ENCODE measurements at regions of chr2 and their contacts with region 1.

Region 1: DNA sequence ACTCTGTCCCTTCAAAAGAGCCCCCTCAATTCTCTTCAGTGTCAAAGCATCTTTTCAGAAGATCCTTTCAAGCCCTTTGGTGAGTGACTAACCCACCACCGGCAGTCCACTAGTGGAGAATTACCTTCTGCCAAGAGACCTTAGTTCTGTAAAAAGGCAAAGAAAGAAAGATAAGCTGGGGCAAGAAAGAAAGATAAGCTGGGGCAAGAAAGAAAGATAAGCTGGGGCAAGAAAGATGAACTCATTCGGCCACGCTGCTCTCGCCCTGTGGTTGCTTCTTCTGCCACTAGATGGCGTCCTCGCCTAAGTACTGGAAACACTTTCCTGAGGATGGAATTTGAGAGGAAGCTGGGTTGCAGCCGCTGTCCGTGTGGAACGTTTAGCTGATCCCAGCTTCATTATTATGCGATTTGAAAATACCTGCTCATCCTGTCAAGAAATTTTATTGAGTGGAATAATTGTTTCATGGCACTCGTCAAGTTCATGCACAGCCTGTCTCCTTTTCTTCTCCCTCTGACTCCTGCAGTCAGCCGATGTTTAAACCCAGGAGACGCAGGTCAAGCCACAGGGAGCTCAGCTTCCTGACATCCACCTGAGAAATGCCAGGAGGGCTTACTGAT is 17.3 kb upstream of the ANXA4 start:
- DNase-seq: peak; percentile 89
- H3K4me3 ChIP-seq: peak overlapping the region in 2 of 4 donors; percentile 14 to 37
- H3K27ac ChIP-seq: no peak overlapping the region
- H3K4me1 ChIP-seq: peaks cover 0 to 4% (median 2%) of the 10 kb centered on the region in 4 donors
- H3K27me3 ChIP-seq: no peaks in the 10 kb centered on the region
- CTCF ChIP-seq: peak; percentile 96 to 98 (median 96)
- EP300 ChIP-seq: no peak
- POLR2A ChIP-seq: no peak

Region 2: DNA sequence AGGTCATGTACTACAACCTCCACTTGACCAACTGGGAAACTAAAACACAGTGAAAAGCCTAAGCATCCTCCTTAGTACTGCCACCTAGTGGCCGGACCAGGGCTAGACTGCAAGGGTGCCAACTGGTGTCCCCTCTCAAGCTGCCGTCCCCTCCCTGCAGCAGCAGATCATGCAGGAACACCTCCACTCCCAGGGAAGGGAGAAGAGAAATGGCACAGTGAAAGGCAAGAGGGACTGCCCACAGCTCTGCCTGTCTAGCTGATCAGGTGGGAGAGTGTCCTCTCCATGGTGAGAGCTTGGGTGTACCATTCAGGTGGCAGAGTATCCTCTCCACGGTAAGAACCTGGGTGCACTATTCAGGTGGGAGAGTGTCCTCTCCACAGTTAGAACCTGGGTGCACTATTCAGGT is 159.2 kb before region 1 on chr2:
- in situ Hi-C with region 1: loop called in 3 of 4 experiments (anchors 10 to 25 kb)
- intact Hi-C with region 1: loop called (anchors 5 kb)
- DNase-seq: peak; percentile 64
- H3K4me3 ChIP-seq: no peak overlapping the region
- H3K27ac ChIP-seq: peak overlapping the region in 1 of 4 donors; percentile 50
- H3K4me1 ChIP-seq: peaks cover 0 to 52% (median 7%) of the 10 kb centered on the region in 4 donors
- H3K27me3 ChIP-seq: no peaks in the 10 kb centered on the region
- CTCF ChIP-seq: peak; percentile 51 to 66 (median 63)
- EP300 ChIP-seq: no peak
- POLR2A ChIP-seq: no peak

Region 3: DNA sequence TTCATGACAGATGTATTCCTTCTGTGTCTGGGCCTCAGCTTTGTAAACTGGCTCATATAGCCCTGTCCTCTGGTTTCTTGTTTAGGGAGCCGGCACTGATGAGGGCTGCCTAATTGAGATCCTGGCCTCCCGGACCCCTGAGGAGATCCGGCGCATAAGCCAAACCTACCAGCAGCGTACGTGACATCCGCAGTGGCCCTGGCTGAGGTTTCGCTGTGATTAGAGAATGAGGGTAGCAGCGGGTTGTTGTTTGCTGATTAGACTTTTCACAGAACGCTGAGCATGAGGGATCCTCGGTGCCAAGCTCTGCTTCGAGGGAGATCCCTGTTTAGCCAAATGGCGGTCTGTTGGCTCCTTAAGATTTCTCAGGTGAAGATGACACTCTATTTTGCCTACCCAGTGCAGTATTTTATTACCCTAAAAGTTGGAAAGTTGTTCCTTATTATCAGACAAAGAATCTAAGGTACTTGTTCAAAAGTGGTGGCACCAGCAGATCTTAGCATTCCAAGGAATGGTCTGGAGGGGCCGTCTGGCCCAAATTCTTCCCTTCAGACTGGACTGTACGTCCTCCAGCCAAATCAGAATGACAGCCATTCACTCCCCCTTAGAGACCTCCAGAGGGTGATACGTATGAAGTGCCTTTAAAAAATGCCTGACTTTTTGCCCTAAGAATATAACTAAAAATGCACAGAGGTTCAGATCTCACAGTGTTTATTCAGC is 83.3 kb after region 1 on chr2:
- in situ Hi-C with region 1: loop called in 3 of 4 experiments (anchors 5 to 10 kb)
- intact Hi-C with region 1: no loop called
- DNase-seq: no peak
- H3K4me3 ChIP-seq: no peak overlapping the region
- H3K27ac ChIP-seq: no peak overlapping the region
- H3K4me1 ChIP-seq: no peaks in the 10 kb centered on the region
- H3K27me3 ChIP-seq: no peaks in the 10 kb centered on the region
- CTCF ChIP-seq: no peak
- EP300 ChIP-seq: no peak
- POLR2A ChIP-seq: no peak

Region 4: GRCh38 chr2:69816923-69817542 is 92.4 kb after region 1 on chr2:
- in situ Hi-C with region 1: loop called in 3 of 4 experiments (anchors 5 to 10 kb)
- intact Hi-C with region 1: loop called (anchors 2 kb)
- DNase-seq: peak; percentile 82
- H3K4me3 ChIP-seq: no peak overlapping the region
- H3K27ac ChIP-seq: no peak overlapping the region
- H3K4me1 ChIP-seq: peaks cover 0 to 4% (median 0%) of the 10 kb centered on the region in 4 donors
- H3K27me3 ChIP-seq: no peaks in the 10 kb centered on the region
- CTCF ChIP-seq: peak; percentile 91 to 98 (median 95)
- EP300 ChIP-seq: no peak
- POLR2A ChIP-seq: no peak

Region 5: DNA sequence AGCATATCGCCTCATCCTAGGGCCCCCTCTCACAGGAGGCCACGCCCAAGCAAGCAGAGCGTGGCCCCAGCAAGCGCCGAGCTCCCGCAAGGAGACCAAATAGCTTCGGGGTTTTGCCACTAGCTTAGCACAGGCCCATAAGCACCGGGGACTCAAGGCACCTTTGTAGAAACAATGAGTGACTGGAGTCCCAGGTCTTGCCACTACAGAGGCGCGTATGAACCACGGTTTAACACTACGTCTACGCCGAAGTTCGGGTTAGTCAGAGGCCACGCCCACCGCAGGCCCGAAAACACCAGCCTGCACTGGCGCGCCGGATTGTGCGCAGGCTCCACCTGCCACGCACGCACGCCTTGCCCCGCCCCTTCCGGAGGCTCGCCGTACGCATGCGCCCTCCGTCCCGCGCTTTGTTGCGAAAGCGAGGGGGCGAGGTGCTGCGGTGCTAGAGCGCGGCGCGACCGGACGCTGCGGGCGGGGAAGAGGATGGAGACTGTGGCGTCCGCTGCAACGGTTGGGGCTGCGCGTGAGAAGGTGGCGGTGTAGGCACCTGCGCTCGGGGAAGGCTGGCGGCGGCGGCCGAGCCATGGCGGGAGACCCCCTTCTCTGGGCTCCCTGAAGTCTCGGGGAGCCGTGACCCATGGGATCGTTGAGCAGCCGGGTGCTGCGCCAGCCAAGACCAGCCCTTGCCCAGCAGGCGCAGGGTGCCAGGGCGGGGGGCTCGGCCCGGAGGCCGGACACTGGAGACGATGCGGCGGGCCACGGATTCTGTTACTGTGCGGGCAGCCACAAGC is 104.8 kb after region 1 on chr2 and contains the start of gene GMCL1:
- in situ Hi-C with region 1: loop called in 1 of 4 experiments (anchors 5 kb)
- intact Hi-C with region 1: no loop called
- DNase-seq: peak; percentile 99
- H3K4me3 ChIP-seq: peak within 1 kb of the TSS; percentile 88 to 99 (median 91)
- H3K27ac ChIP-seq: peak within 1 kb of the TSS; percentile 90 to 95 (median 92)
- H3K4me1 ChIP-seq: peaks cover 14 to 42% (median 27%) of the 10 kb centered on the region in 4 donors
- H3K27me3 ChIP-seq: no peaks in the 10 kb centered on the region
- CTCF ChIP-seq: peak in 1 of 5 experiments; percentile 27
- EP300 ChIP-seq: no peak
- POLR2A ChIP-seq: peak; percentile 88
- total RNA-seq, gene GMCL1: 5.0 to 82.3 (median 20.9) TPM

Measured in transverse colon (tissue), 4 donors.